ENCODE measurements at regions of chr14 and their contacts with region 1.

Region 1: GRCh38 chr14:105351920-105352851 is 37.6 kb downstream of the PACS2 start:
- DNase-seq: peak; percentile 71 to 90 (median 87)
- ATAC-seq: peak; percentile 97
- H3K4me3 ChIP-seq: no peak overlapping the region
- H3K4me3 Mint-ChIP-seq: no peak overlapping the region
- H3K27ac ChIP-seq: no peak overlapping the region
- H3K27ac Mint-ChIP-seq: peak overlapping the region in 1 of 9 donors; percentile 56
- H3K4me1 ChIP-seq: peaks cover 0 to 4% of the 10 kb centered on the region in 2 donors
- H3K4me1 Mint-ChIP-seq: peaks cover 4 to 5% (median 4%) of the 10 kb centered on the region in 7 donors
- H3K27me3 ChIP-seq: no peaks in the 10 kb centered on the region
- H3K27me3 Mint-ChIP-seq: no peaks in the 10 kb centered on the region

Region 2: GRCh38 chr14:104895786-104896661 is 456.2 kb before region 1 on chr14:
- CTCF ChIA-PET with region 1: no interaction called
- POLR2A ChIA-PET with region 1: no interaction called
- intact Hi-C with region 1: loop called in 1 of 2 experiments (anchors 2 kb)
- DNase-seq: peak in 1 of 9 donors; percentile 18
- ATAC-seq: no peak
- H3K4me3 ChIP-seq: no peak overlapping the region
- H3K4me3 Mint-ChIP-seq: no peak overlapping the region
- H3K27ac ChIP-seq: no peak overlapping the region
- H3K27ac Mint-ChIP-seq: no peak overlapping the region
- H3K4me1 ChIP-seq: no peaks in the 10 kb centered on the region
- H3K4me1 Mint-ChIP-seq: peaks cover 0 to 4% (median 0%) of the 10 kb centered on the region in 7 donors
- H3K27me3 ChIP-seq: no peaks in the 10 kb centered on the region
- H3K27me3 Mint-ChIP-seq: peaks cover 0 to 6% (median 0%) of the 10 kb centered on the region in 5 donors

Region 3: DNA sequence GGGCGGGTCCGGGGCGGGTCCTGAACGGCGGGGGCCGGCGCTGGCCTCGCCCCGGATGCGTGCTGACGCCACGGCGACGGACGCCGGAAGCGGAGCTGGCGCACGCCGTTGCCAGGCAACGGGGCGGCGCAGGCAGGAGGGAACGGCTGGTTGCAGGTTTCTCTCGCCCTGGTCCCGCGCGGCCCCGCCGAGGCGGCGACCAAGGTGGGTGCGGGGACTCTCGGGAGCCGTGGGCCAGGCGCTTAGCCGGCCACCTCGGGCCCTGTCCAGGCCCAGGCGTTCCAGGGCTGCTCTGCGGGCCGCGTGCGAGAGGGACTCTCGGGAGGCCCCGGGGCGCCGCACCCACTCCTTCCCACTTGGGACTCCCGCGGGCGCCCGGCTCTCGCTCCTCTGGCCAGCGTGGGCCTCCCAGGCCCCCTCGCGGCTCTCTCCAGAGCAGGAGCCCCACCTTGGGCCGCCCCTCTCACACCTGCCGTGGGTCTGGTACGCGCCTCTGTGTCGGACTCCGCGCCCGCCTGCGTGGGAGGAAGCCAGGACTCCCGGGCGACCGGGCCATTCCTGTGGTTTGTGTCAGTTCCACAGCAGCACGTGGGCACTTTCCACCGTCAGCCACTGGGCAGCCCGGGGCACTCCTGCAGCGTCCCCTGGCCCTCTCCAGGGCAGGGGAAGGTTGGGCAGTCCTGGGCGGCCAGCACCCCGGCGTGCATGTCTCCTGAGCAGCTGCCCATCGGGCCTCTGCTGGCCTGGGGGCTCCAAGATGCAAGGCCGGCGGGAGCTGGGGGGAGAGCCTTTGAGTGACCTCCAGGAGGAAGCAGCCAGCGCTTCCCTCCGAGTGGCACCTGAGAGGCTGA is 366.3 kb before region 1 on chr14 and contains the start of gene CLBA1:
- CTCF ChIA-PET with region 1: no interaction called
- POLR2A ChIA-PET with region 1: no interaction called
- intact Hi-C with region 1: loop called in 1 of 2 experiments (anchors 2 kb)
- DNase-seq: peak; percentile 81 to 90 (median 89)
- ATAC-seq: peak; percentile 96
- H3K4me3 ChIP-seq: peak within 1 kb of the TSS; percentile 56
- H3K4me3 Mint-ChIP-seq: peak within 1 kb of the TSS; percentile 64 to 86 (median 76)
- H3K27ac ChIP-seq: peak within 1 kb of the TSS; percentile 72
- H3K27ac Mint-ChIP-seq: peak within 1 kb of the TSS in 8 of 9 donors; percentile 74 to 89 (median 86)
- H3K4me1 ChIP-seq: no peaks in the 10 kb centered on the region
- H3K4me1 Mint-ChIP-seq: peaks cover 0 to 9% (median 4%) of the 10 kb centered on the region in 7 donors
- H3K27me3 ChIP-seq: no peaks in the 10 kb centered on the region
- H3K27me3 Mint-ChIP-seq: peaks cover 0 to 5% (median 4%) of the 10 kb centered on the region in 5 donors
- total RNA-seq, gene CLBA1: 0.51 to 2.1 (median 1.3) TPM

Region 4: DNA sequence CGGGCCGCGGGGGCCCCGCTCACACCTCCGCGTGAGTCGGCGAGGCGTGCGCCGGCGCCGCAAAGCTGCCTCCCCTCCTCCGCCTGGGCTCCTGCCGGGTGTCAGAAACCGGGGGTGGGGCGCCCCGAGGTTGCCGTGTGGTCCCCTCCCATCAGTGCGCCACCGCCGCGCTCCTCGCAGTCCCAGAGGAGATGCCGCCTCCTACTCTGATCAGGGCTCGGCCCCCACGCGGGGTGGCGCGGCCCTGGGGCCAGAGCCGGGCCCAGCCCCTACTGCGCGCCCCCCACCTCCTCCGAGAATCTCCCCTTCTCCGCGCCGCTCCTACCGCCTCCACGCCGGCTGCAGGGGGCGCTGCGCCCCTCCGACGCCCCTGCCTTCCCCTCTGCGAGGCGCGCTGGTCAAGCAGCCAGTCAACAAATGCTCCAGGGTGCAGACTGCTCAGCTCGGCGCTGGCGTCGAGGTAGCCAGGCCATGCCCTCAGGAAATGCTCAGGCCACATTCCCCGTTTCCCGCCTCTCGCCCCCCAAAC is 183.1 kb before region 1 on chr14:
- CTCF ChIA-PET with region 1: no interaction called
- POLR2A ChIA-PET with region 1: no interaction called
- intact Hi-C with region 1: loop called in 1 of 2 experiments (anchors 1 kb)
- DNase-seq: peak in 5 of 9 donors; percentile 29 to 52 (median 36)
- ATAC-seq: peak; percentile 51
- H3K4me3 ChIP-seq: no peak overlapping the region
- H3K4me3 Mint-ChIP-seq: peak overlapping the region; percentile 14 to 81 (median 64)
- H3K27ac ChIP-seq: no peak overlapping the region
- H3K27ac Mint-ChIP-seq: no peak overlapping the region
- H3K4me1 ChIP-seq: peaks cover 6 to 11% of the 10 kb centered on the region in 2 donors
- H3K4me1 Mint-ChIP-seq: peaks cover 0 to 13% (median 5%) of the 10 kb centered on the region in 7 donors
- H3K27me3 ChIP-seq: peaks cover 0 to 6% of the 10 kb centered on the region in 2 donors
- H3K27me3 Mint-ChIP-seq: peaks cover 0 to 23% (median 15%) of the 10 kb centered on the region in 5 donors

Region 5: DNA sequence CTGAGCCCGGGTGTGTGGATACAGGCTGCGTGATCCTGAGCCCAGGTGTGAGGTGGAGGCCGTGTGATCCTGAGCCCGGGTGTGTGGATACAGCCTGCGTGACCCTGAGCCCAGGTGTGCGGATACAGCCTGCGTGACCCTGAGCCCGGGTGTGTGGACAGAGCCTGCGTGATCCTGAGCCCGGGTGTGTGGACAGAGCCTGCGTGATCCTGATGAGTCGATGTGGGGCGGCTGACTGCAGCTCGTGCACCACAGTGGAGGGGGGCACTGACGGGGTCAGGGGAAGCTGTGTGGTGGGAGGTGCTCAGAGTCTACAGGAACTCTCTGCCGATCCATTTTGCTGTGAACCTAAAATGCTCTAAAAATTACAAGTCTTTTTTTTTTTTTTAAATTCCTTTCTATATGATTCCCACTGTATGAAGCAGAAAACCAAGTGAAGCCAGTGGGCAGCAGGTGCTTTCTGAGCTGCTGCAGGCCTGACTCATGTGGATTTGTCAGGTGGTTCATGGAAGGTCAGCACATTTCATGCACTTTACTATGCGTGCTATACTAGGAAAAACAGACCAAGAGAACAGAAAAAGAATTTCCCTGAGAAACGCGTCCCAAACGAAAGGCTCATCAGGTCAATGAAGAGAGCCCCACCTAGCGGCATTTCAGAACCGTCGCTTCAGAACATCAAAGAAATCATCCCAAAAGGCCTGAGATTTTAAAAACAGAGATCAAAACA is 70.7 kb before region 1 on chr14:
- CTCF ChIA-PET with region 1: no interaction called
- POLR2A ChIA-PET with region 1: no interaction called
- intact Hi-C with region 1: loop called in 1 of 2 experiments (anchors 1 kb)
- DNase-seq: peak in 6 of 9 donors; percentile 10 to 41 (median 30)
- ATAC-seq: peak; percentile 26
- H3K4me3 ChIP-seq: no peak overlapping the region
- H3K4me3 Mint-ChIP-seq: peak overlapping the region in 2 of 10 donors; percentile 1 to 5
- H3K27ac ChIP-seq: no peak overlapping the region
- H3K27ac Mint-ChIP-seq: peak overlapping the region in 5 of 9 donors; percentile 5 to 74 (median 47)
- H3K4me1 ChIP-seq: peaks cover 0 to 12% of the 10 kb centered on the region in 2 donors
- H3K4me1 Mint-ChIP-seq: peaks cover 13 to 55% (median 46%) of the 10 kb centered on the region in 7 donors
- H3K27me3 ChIP-seq: no peaks in the 10 kb centered on the region
- H3K27me3 Mint-ChIP-seq: no peaks in the 10 kb centered on the region